Calu3 (cell line): ENCODE measurements at regions of chr5 and their contacts with region 1.

Region 1: GRCh38 chr5:177325868-177326381 is 14.2 kb upstream of the MXD3 start:
- DNase-seq: peak; percentile 44
- H3K4me3 Mint-ChIP-seq: peak overlapping the region; percentile 46
- H3K27ac Mint-ChIP-seq: peak overlapping the region; percentile 55
- H3K4me1 Mint-ChIP-seq: peaks cover 52% of the 10 kb centered on the region
- H3K27me3 Mint-ChIP-seq: no peaks in the 10 kb centered on the region
- CTCF ChIP-seq: no peak

Region 2: GRCh38 chr5:177276886-177277285 is 49.0 kb before region 1 on chr5:
- CTCF ChIA-PET with region 1: no interaction called
- intact Hi-C with region 1: no loop called
- DNase-seq: no peak
- H3K4me3 Mint-ChIP-seq: no peak overlapping the region
- H3K27ac Mint-ChIP-seq: peak overlapping the region; percentile 4
- H3K4me1 Mint-ChIP-seq: no peaks in the 10 kb centered on the region
- H3K27me3 Mint-ChIP-seq: no peaks in the 10 kb centered on the region
- CTCF ChIP-seq: no peak

Region 3: DNA sequence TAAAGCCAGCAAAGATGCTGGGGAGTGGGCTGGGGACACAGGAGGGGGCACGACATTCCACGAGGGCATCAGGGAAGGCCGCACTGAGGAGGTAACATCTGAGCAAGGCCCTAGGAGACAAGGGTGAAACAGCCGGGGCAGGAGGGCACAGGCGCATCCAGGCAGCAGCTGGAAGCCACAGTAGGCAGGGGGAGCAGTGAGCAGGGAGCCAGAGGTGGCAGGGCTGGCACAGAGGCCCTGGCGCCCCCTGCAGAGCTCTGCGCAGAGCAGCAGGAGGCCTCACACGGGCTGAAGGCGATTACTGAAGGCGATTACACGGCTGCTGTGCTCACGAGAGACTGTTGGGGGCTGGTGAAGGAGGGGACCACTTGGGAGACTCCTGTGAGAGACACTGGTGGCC is 10.2 kb after region 1 on chr5:
- CTCF ChIA-PET with region 1: interaction called, 16 read pairs
- intact Hi-C with region 1: no loop called
- DNase-seq: peak; percentile 63
- H3K4me3 Mint-ChIP-seq: no peak overlapping the region
- H3K27ac Mint-ChIP-seq: peak overlapping the region; percentile 19
- H3K4me1 Mint-ChIP-seq: peaks cover 31% of the 10 kb centered on the region
- H3K27me3 Mint-ChIP-seq: no peaks in the 10 kb centered on the region
- CTCF ChIP-seq: peak; percentile 61

Region 4: GRCh38 chr5:177472460-177473441 is 146.8 kb after region 1 on chr5:
- CTCF ChIA-PET with region 1: no interaction called
- intact Hi-C with region 1: no loop called
- DNase-seq: peak; percentile 63
- H3K4me3 Mint-ChIP-seq: peak overlapping the region; percentile 76
- H3K27ac Mint-ChIP-seq: peak overlapping the region; percentile 18
- H3K4me1 Mint-ChIP-seq: peaks cover 27% of the 10 kb centered on the region
- H3K27me3 Mint-ChIP-seq: no peaks in the 10 kb centered on the region
- CTCF ChIP-seq: no peak

Region 5: DNA sequence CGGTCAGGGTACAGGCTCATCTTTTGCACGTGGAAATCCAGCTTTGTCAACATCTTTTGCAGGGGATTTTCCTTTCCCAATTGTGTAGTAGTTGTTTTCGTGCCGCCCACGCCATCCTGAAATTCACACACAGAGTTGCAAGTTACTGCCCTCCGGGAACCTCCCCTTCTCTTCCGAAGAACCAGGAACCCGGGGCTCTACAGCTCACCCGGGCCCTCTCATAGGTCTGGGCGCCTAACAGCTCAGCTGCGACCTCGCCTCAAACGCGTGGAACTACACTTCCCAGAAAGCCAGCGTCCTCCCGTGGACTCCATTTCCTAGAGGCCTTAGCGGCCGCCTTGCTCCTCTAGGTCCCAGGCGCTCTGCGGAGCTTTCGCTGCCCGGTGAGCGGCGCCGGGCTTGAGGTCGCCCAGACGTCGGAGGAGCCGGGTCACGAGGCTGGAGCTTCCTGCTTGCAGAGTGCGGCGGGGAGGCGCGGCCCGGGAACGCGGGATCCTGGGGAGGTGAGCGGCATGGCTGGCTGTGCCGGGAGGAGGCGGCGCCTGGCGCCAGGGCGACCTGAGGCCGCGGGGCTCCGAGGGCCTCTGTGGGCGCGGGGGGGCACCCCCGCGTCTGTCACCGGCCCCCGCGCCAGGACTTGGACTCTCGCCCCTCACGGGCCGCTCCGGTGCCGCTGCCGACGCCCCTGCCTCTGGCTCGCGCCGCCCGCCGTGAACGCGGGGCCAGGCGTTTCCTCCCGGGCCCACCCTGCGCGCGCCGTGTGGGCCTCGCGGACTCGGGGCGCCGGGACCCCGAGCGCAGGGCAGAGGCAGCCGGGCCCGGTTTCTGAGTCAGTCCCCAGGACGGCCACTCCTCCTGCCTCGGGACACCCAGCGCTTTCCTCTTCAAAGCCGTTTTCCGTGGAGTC is 1534.0 kb after region 1 on chr5 and contains the start of gene ZNF354B:
- CTCF ChIA-PET with region 1: no interaction called
- intact Hi-C with region 1: no loop called
- DNase-seq: peak; percentile 91
- H3K4me3 Mint-ChIP-seq: peak within 1 kb of the TSS; percentile 83
- H3K27ac Mint-ChIP-seq: peak within 1 kb of the TSS; percentile 70
- H3K4me1 Mint-ChIP-seq: no peaks in the 10 kb centered on the region
- H3K27me3 Mint-ChIP-seq: no peaks in the 10 kb centered on the region
- CTCF ChIP-seq: peak; percentile 13
- total RNA-seq, gene ZNF354B: 17.3 and 19.2 TPM in 2 replicates